Prostate gland (tissue), 2 donors: ENCODE measurements at regions of chr14 and their contacts with region 1.

Region 1: DNA sequence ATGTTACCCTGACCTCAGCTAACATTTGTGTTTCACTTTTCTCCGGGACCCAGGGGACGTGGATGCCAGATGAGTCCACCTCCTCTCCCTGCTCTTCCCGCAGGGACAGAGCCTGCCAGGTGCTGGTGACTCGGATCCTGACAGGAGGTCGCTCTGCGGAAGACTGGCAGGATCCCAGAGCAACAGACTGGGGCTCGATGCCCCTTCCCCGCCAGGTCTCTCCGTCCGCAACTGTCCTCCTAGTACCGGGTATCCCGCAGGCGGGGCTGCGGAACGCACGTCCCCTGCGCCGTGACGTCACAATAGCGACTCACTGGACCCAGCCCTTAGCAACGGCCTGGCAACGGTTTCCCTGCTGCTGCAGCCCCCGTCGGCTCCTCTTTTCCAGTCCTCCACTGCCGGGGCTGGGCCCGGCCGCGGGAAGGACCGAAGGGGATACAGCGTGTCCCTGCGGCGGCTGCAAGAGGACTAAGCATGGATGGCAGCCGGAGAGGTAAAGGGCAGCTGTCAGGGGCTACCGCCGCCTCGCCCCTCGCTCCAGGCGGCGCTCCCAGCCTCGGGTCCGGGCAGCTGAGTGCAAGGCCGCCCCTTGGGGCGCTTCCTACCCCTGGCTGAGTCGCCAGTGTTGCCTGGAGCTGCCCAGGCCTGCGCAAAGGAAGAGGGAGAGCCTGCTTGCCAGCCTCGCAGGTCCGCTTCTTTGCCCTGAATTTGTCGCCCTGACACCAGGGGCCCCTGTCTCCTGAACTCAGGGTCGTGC is at the start of gene SPATA7:
- DNase-seq: peak; percentile 95
- H3K4me3 ChIP-seq: peak within 1 kb of the TSS; percentile 65 to 80
- H3K27ac ChIP-seq: peak within 1 kb of the TSS; percentile 77 to 87
- H3K4me1 ChIP-seq: no peaks in the 10 kb centered on the region
- H3K27me3 ChIP-seq: no peaks in the 10 kb centered on the region
- CTCF ChIP-seq: peak in 2 of 4 experiments; percentile 16 to 26
- POLR2A ChIP-seq: peak; percentile 86
- total RNA-seq, gene SPATA7: 13.1 to 21.4 TPM

Region 2: DNA sequence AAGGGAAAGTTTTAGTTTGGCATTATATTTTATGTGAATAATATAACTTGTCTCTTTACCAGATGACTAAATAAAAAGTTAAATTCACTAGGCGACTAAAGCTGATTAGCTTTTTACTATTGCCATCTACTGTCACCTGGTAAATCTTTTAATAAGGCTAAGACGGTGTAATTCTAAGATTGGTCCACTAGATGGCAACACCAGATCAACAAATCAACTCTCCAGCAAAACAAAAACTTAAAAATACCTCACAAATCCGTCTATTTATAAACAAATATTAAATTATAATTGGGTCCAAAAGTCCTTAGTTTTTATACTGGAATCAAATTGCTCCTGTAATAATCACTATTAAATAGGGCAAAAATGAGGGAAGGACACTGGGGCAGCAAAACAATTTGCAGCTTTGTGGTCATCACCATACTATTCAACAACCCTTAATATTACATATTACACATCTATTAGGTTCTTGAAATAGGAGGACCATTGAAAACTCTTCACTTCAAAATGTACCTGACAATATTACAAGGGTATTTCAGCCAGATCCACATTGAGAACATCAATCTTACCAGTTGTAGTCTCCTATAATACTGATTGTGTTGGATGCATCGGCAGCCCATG is 440.4 kb before region 1 on chr14:
- intact Hi-C with region 1: loop called (anchors 10 kb)
- DNase-seq: no peak
- H3K4me3 ChIP-seq: no peak overlapping the region
- H3K27ac ChIP-seq: no peak overlapping the region
- H3K4me1 ChIP-seq: no peaks in the 10 kb centered on the region
- H3K27me3 ChIP-seq: no peaks in the 10 kb centered on the region
- CTCF ChIP-seq: peak; percentile 32 to 72 (median 60)
- POLR2A ChIP-seq: no peak

Region 3: DNA sequence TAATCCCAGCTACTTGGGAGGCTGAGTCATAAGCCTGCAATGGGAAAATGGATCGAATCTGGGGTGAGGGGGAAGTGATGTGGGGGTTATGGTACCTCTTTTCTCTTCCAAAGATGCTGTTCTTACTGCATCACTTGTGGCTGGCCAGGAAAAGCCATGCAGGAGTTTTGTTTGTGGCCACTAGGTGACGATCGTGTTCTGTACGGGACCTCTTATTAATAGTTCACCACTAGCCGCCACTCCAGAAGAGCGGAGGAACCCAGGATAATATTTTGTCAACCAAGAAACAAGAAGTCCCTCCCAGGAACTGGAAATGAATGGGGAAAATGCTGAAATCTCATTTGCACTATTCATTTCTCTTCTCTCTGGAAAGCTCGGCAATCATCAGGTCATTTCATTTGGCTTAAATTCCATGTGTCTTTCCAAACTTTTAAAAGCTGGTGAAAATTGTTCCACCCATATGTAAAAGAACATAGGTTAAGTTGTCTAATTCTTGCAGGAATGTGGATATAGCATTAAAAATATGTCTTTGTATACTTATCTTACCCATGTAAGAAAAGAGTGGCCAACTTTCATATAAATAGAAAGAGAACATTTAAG is 371.7 kb before region 1 on chr14:
- intact Hi-C with region 1: loop called (anchors 10 kb)
- DNase-seq: peak; percentile 67
- H3K4me3 ChIP-seq: no peak overlapping the region
- H3K27ac ChIP-seq: no peak overlapping the region
- H3K4me1 ChIP-seq: no peaks in the 10 kb centered on the region
- H3K27me3 ChIP-seq: no peaks in the 10 kb centered on the region
- CTCF ChIP-seq: peak; percentile 70 to 87 (median 86)
- POLR2A ChIP-seq: no peak

Region 4: GRCh38 chr14:88551094-88551870 is 165.8 kb after region 1 on chr14:
- intact Hi-C with region 1: loop called (anchors 5 kb)
- DNase-seq: peak; percentile 75
- H3K4me3 ChIP-seq: peak overlapping the region; percentile 51 to 57
- H3K27ac ChIP-seq: peak overlapping the region; percentile 64 to 76
- H3K4me1 ChIP-seq: peaks cover 11% of the 10 kb centered on the region
- H3K27me3 ChIP-seq: no peaks in the 10 kb centered on the region
- CTCF ChIP-seq: peak; percentile 16 to 74 (median 63)
- POLR2A ChIP-seq: peak; percentile 44